ENCODE measurements at regions of chr10 and their contacts with region 1.

Region 1: GRCh38 chr10:27783660-27784059 is 38.0 kb upstream of the MKX start:
- DNase-seq: no peak
- H3K4me3 ChIP-seq: no peak overlapping the region
- H3K27ac ChIP-seq: no peak overlapping the region
- H3K4me1 ChIP-seq: no peaks in the 10 kb centered on the region
- H3K27me3 ChIP-seq: no peaks in the 10 kb centered on the region
- CTCF ChIP-seq: no peak
- POLR2A ChIP-seq: no peak

Region 2: GRCh38 chr10:27838361-27838760 is 54.7 kb after region 1 on chr10:
- intact Hi-C with region 1: loop called (anchors 2 kb)
- DNase-seq: no peak
- H3K4me3 ChIP-seq: no peak overlapping the region
- H3K27ac ChIP-seq: no peak overlapping the region
- H3K4me1 ChIP-seq: no peaks in the 10 kb centered on the region
- H3K27me3 ChIP-seq: no peaks in the 10 kb centered on the region
- CTCF ChIP-seq: no peak
- POLR2A ChIP-seq: no peak

Region 3: DNA sequence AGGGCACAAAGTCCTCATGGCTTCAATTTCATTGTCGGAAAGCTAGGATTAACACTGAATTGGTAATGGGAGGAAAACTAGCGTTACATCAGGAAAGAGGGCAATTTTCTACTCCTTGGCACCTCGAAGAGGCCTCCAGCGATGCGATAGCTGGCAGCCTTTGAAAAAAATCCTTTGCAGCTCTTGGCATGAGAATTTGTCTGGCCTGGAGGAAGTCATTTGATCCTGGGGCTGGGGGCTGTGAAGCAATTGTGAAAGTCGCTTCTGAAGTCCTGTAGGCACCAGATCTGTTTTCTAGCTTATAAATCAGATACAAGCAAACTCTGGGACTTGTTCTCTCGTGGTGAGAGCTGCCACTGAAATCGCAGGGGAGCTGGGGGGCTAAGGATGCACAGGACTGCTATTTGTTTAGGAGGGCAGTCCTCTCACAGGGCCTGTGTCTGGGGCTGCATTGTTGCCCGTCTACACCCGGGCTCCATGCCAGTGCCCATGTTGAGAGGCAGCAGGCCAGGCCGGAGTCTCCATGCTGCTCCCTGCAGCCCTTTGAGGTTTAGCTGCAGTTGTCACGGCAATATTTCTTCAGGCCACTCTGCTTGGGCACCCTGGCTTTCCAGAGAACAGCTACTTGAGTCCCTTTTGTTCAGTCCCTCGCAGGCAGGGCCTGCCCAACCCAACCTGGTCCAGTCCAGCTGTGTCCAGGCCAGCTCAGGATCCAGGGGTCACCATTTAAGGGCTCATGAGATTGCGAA is 1298.5 kb after region 1 on chr10:
- intact Hi-C with region 1: no loop called
- DNase-seq: no peak
- H3K4me3 ChIP-seq: no peak overlapping the region
- H3K27ac ChIP-seq: no peak overlapping the region
- H3K4me1 ChIP-seq: no peaks in the 10 kb centered on the region
- H3K27me3 ChIP-seq: no peaks in the 10 kb centered on the region
- CTCF ChIP-seq: no peak
- POLR2A ChIP-seq: no peak